Endothelial cell of umbilical vein (primary cell): ENCODE measurements at regions of chr20 and their contacts with region 1.

Region 1: DNA sequence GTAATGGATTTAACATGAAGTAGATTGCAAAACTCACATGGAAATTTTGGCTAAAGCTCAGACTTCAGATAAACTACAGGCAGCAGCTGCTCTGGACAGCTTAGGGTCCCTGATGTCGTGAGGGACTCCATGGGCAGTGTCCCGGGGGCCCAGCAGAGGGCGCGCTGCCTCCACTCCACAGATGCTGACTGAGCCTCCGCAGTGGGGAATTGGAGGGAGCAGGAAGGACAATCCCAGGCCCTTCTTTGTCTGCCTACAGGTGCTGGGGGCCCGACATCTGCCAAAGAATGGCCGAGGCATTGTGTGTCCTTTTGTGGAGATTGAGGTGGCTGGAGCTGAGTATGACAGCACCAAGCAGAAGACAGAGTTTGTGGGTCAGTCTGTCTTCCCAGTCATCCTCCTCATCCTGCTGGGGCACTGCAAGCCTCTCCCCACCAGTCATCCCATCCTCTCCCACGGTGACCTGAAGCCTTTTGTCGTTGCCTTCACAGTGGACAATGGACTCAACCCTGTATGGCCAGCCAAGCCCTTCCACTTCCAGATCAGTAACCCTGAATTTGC is 35.9 kb downstream of the PLCG1 start:
- DNase-seq: peak; percentile 70
- H3K4me3 ChIP-seq: no peak overlapping the region
- H3K27ac ChIP-seq: no peak overlapping the region
- H3K4me1 ChIP-seq: peaks cover 7% of the 10 kb centered on the region
- H3K27me3 ChIP-seq: no peaks in the 10 kb centered on the region
- CTCF ChIP-seq: peak; percentile 94 to 96
- POLR2A ChIP-seq: no peak

Region 2: DNA sequence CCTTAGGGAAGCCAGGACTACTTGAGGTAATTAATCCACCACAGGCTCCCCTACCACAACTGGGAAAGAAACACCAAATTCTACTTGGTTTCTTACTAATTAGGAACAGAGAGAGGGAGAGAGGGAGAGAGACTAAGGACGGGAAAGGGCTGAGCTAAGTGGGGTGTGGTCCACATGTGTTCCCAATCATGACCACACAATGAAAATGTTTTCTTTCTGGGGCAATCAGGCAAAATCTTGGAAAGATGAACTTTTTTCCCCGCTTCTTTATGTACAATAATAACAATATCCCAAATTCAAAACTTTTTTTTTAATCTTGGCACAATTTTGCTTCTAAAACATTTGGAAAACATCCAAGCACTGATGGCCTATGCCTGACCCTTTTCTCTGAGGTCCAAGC is 1218.6 kb before region 1 on chr20:
- CTCF ChIA-PET with region 1: no interaction called
- POLR2A ChIA-PET with region 1: no interaction called
- dilution Hi-C with region 1: no loop called
- intact Hi-C with region 1: no loop called
- DNase-seq: no peak
- H3K4me3 ChIP-seq: no peak overlapping the region
- H3K27ac ChIP-seq: no peak overlapping the region
- H3K4me1 ChIP-seq: no peaks in the 10 kb centered on the region
- H3K27me3 ChIP-seq: no peaks in the 10 kb centered on the region
- CTCF ChIP-seq: no peak
- POLR2A ChIP-seq: no peak

Region 3: DNA sequence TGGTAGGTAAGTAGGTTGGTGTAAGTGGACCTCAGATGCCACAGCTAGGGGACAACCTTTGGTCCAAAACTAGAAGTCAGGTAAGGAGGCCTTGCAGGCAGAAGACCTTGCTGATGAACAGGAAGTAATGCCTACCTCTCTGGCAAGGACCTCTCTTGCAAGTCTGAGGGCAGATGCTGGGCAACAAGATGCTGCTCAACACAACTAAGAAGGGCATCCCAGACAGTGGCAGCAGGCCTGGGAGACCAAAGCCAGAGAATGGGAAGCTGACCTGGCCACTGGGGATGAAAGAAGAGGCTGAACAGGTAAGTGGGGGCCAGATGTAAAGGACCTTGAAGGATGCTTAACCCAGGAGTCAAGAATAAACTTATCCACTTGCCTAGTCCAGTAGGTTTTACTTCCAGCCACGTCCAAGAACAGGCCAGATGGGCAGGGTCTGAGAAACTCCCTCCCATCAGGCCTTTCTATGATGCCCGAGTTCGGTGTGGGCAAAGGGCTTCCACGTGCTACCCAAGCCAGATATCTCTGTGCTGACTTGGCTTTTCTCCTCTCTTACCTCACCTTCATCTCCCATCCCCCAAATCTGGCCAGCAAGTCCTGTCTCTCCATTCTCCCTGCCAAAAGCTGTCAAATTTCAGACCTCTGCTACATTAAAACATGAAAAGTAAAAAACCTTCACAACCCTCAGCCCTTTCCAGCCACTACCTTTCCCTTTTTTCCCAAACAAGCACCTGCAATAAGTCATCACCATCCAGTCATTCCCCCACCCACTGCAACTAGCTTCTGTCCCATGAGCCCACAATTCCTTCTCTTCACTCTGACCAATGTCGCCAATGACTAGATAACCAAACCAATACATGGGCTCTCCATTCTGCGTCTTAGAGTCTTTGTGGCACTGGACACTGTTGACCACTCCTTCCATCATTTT is 47.4 kb before region 1 on chr20:
- CTCF ChIA-PET with region 1: no interaction called
- POLR2A ChIA-PET with region 1: no interaction called
- dilution Hi-C with region 1: no loop called
- intact Hi-C with region 1: no loop called
- DNase-seq: no peak
- H3K4me3 ChIP-seq: no peak overlapping the region
- H3K27ac ChIP-seq: no peak overlapping the region
- H3K4me1 ChIP-seq: no peaks in the 10 kb centered on the region
- H3K27me3 ChIP-seq: no peaks in the 10 kb centered on the region
- CTCF ChIP-seq: no peak
- POLR2A ChIP-seq: no peak

Region 4: DNA sequence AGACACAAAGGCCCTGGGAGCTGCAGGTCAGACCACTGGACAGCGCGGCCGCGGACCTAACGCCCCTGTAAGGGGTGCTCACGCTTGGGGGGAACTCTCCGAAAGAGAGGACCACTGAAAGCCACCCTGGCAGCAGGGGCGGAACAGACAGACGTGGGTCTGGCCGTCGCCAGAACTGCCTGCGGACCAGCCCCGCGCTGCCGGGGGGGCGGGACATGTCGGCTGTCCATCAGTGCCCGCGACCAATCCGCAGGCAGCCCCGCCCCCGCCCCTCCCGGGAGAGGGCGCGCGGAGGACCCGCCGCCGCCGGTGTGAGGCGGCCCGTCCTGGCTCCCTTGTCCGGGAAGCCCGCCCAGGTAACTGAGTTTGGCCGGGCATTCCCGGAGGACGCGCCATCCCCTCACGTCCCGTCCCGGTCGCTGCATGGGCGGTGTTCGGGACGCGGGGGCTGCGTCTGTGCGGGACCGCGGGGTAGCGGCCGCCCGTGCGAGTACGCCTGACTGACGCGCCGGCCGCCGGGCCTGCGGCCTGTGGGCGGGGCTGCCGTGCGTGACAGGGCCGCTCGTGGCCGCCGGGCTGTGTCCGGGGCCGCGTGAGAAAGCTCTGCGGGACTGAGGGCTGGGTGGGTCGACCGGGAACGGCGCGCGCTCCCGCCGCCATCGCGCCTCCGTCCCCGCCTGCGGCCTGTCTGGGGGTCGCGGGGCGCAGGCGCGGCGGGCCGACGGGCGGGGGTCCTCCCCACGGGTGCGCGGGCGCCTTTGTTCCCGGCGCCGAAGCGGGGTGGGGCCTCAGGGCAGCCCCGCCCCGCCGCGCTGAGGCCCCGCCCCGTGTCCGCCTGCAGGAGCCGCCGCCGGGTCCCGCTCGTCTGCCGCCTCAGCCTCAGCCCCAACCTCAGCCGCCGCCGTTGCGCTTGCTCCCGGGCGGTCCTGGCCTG is 36.3 kb before region 1 on chr20 and contains the start of gene PLCG1:
- CTCF ChIA-PET with region 1: interaction called, 61 read pairs
- POLR2A ChIA-PET with region 1: no interaction called
- dilution Hi-C with region 1: no loop called
- intact Hi-C with region 1: loop called (anchors 2 kb)
- DNase-seq: peak; percentile 84
- H3K4me3 ChIP-seq: peak within 1 kb of the TSS; percentile 30 to 70 (median 68)
- H3K27ac ChIP-seq: peak within 1 kb of the TSS; percentile 81
- H3K4me1 ChIP-seq: peaks cover 38% of the 10 kb centered on the region
- H3K27me3 ChIP-seq: no peaks in the 10 kb centered on the region
- CTCF ChIP-seq: no peak
- POLR2A ChIP-seq: peak; percentile 70
- total RNA-seq, gene PLCG1: 219 and 224 TPM in 2 replicates

Region 5: DNA sequence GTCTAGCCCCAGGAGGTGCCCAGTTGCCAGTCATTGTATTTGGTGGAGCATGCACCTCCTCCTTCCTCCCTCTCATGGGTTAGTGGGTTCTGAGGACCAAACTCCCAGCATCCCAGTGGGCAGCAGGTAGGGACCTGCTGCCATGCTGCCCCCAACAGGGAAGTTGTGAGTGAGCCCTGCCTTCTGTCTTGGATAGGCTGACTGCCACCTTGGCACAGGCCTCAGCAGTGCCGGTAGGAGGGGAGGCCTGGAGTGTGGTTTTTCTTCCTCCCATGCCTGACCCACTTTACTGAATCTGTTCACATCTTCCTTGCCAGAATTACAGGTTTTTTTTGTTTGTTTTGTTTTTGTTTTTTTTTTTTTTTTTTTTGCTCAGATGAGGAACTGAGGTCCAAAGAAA is 11.4 kb before region 1 on chr20:
- CTCF ChIA-PET with region 1: interaction called, 11 read pairs
- POLR2A ChIA-PET with region 1: no interaction called
- dilution Hi-C with region 1: no loop called
- intact Hi-C with region 1: no loop called
- DNase-seq: no peak
- H3K4me3 ChIP-seq: no peak overlapping the region
- H3K27ac ChIP-seq: no peak overlapping the region
- H3K4me1 ChIP-seq: no peaks in the 10 kb centered on the region
- H3K27me3 ChIP-seq: no peaks in the 10 kb centered on the region
- CTCF ChIP-seq: peak in 1 of 2 donors; percentile 7
- POLR2A ChIP-seq: no peak

Region 6: GRCh38 chr20:41232973-41233926 is 60.0 kb after region 1 on chr20:
- CTCF ChIA-PET with region 1: interaction called, 117 read pairs
- POLR2A ChIA-PET with region 1: no interaction called
- dilution Hi-C with region 1: no loop called
- intact Hi-C with region 1: loop called (anchors 1 kb)
- DNase-seq: peak; percentile 59
- H3K4me3 ChIP-seq: no peak overlapping the region
- H3K27ac ChIP-seq: peak overlapping the region; percentile 40
- H3K4me1 ChIP-seq: peaks cover 17% of the 10 kb centered on the region
- H3K27me3 ChIP-seq: no peaks in the 10 kb centered on the region
- CTCF ChIP-seq: no peak
- POLR2A ChIP-seq: no peak

Region 7: DNA sequence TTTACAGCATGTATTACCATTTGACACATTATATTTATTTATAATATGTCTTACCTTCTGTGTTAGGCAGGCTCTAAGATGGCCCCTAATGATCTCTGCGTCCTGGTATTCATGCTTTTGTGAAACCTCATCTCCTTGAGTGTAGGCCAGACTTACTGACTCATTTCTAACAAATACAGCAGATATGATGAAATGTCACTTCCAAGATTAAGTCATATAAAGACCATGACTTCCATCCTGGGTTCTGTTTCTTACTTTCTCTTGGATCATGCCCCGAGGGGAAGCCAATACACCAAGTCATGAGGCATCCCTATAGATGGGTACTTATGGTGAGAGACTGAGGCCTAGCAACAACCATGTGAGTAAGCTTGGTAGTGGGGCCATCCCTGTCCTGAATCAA is 114.1 kb after region 1 on chr20:
- CTCF ChIA-PET with region 1: no interaction called
- POLR2A ChIA-PET with region 1: no interaction called
- dilution Hi-C with region 1: no loop called
- intact Hi-C with region 1: no loop called
- DNase-seq: no peak
- H3K4me3 ChIP-seq: no peak overlapping the region
- H3K27ac ChIP-seq: no peak overlapping the region
- H3K4me1 ChIP-seq: no peaks in the 10 kb centered on the region
- H3K27me3 ChIP-seq: no peaks in the 10 kb centered on the region
- CTCF ChIP-seq: no peak
- POLR2A ChIP-seq: no peak

Region 8: GRCh38 chr20:41329435-41330342 is 156.4 kb after region 1 on chr20:
- CTCF ChIA-PET with region 1: interaction called, 16 read pairs
- POLR2A ChIA-PET with region 1: interaction called, 3 read pairs
- dilution Hi-C with region 1: no loop called
- intact Hi-C with region 1: no loop called
- DNase-seq: peak; percentile 94
- H3K4me3 ChIP-seq: no peak overlapping the region
- H3K27ac ChIP-seq: peak overlapping the region; percentile 89
- H3K4me1 ChIP-seq: peaks cover 20% of the 10 kb centered on the region
- H3K27me3 ChIP-seq: no peaks in the 10 kb centered on the region
- CTCF ChIP-seq: no peak
- POLR2A ChIP-seq: peak; percentile 66

Region 9: GRCh38 chr20:41678799-41679198 is 505.6 kb after region 1 on chr20:
- CTCF ChIA-PET with region 1: no interaction called
- POLR2A ChIA-PET with region 1: no interaction called
- dilution Hi-C with region 1: no loop called
- intact Hi-C with region 1: no loop called
- DNase-seq: no peak
- H3K4me3 ChIP-seq: no peak overlapping the region
- H3K27ac ChIP-seq: no peak overlapping the region
- H3K4me1 ChIP-seq: no peaks in the 10 kb centered on the region
- H3K27me3 ChIP-seq: peaks cover 0 to 3% of the 10 kb centered on the region in 2 experiments
- CTCF ChIP-seq: no peak
- POLR2A ChIP-seq: no peak